Calu3 (cell line): ENCODE measurements at regions of chr4 and their contacts with region 1.

Region 1: DNA sequence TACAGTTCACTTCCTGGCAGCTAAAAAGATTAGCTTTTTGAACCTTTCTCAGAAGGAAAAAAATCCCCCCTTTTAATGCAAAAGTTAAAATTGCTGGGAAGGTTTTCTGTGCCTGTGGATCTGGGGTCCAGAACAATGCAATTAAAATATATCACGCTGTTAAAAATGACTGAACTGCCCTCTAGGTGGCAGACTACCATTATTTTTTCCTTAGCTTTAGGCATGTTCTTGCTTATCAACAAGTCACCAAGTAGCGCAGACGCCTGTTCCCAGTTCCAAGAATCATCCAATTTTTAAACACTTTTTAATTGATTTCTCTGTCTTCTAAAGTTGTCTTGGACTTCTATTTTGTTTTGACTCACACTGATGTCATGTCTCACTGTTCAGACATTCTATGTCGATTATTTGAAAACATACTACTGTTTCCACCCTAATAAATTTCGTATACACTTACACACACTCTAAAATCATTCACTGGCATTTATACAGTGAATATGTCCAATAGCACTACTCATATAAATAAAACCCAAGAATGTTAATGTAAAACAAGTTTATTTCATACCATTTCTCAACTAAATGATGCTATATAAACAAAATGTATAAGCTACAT is 661.6 kb downstream of the RAPGEF2 start:
- DNase-seq: peak; percentile 55
- H3K4me3 Mint-ChIP-seq: no peak overlapping the region
- H3K27ac Mint-ChIP-seq: no peak overlapping the region
- H3K4me1 Mint-ChIP-seq: peaks cover 15% of the 10 kb centered on the region
- H3K27me3 Mint-ChIP-seq: no peaks in the 10 kb centered on the region
- CTCF ChIP-seq: peak; percentile 34

Region 2: GRCh38 chr4:159608437-159608836 is 156.0 kb before region 1 on chr4:
- CTCF ChIA-PET with region 1: no interaction called
- intact Hi-C with region 1: loop called (anchors 10 kb)
- DNase-seq: no peak
- H3K4me3 Mint-ChIP-seq: no peak overlapping the region
- H3K27ac Mint-ChIP-seq: no peak overlapping the region
- H3K4me1 Mint-ChIP-seq: peaks cover 4% of the 10 kb centered on the region
- H3K27me3 Mint-ChIP-seq: no peaks in the 10 kb centered on the region
- CTCF ChIP-seq: no peak

Region 3: GRCh38 chr4:159856451-159856850 is 92.0 kb after region 1 on chr4:
- CTCF ChIA-PET with region 1: no interaction called
- intact Hi-C with region 1: loop called (anchors 10 kb)
- DNase-seq: no peak
- H3K4me3 Mint-ChIP-seq: no peak overlapping the region
- H3K27ac Mint-ChIP-seq: no peak overlapping the region
- H3K4me1 Mint-ChIP-seq: peaks cover 10% of the 10 kb centered on the region
- H3K27me3 Mint-ChIP-seq: no peaks in the 10 kb centered on the region
- CTCF ChIP-seq: no peak

Region 4: GRCh38 chr4:159900562-159900961 is 136.1 kb after region 1 on chr4:
- CTCF ChIA-PET with region 1: no interaction called
- intact Hi-C with region 1: loop called (anchors 10 kb)
- DNase-seq: no peak
- H3K4me3 Mint-ChIP-seq: no peak overlapping the region
- H3K27ac Mint-ChIP-seq: no peak overlapping the region
- H3K4me1 Mint-ChIP-seq: peaks cover 10% of the 10 kb centered on the region
- H3K27me3 Mint-ChIP-seq: no peaks in the 10 kb centered on the region
- CTCF ChIP-seq: no peak

Region 5: GRCh38 chr4:159946983-159947615 is 182.7 kb after region 1 on chr4:
- CTCF ChIA-PET with region 1: no interaction called
- intact Hi-C with region 1: loop called (anchors 2 kb)
- DNase-seq: no peak
- H3K4me3 Mint-ChIP-seq: no peak overlapping the region
- H3K27ac Mint-ChIP-seq: no peak overlapping the region
- H3K4me1 Mint-ChIP-seq: no peaks in the 10 kb centered on the region
- H3K27me3 Mint-ChIP-seq: no peaks in the 10 kb centered on the region
- CTCF ChIP-seq: peak; percentile 23

Region 6: DNA sequence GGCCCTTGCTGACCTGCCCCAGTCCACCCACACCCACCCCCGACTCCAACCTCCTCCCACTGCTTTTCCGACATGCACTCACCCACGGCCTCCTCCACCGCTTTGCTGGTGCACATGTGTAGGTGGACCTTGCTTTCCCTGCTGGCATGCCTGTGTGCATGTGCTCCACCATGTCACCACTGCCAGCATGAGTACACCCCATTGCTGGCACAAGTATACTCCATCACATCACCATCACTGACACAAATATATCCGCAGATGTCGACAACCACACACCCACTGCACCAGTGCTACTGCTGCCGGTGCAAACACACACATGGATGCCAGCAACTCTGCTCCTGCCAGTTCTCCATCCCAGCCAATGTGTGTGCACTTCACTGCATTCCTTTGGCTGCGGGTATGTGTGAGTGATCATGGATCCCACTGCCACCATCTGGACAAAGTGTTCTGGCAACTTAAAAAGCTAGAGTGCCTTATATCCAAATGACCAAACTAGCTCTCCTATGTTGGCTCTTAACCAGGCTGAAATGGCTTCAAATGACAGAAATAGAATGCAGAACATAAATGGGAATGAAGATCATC is 410.7 kb after region 1 on chr4:
- CTCF ChIA-PET with region 1: no interaction called
- intact Hi-C with region 1: loop called (anchors 5 kb)
- DNase-seq: no peak
- H3K4me3 Mint-ChIP-seq: no peak overlapping the region
- H3K27ac Mint-ChIP-seq: no peak overlapping the region
- H3K4me1 Mint-ChIP-seq: peaks cover 6% of the 10 kb centered on the region
- H3K27me3 Mint-ChIP-seq: no peaks in the 10 kb centered on the region
- CTCF ChIP-seq: no peak

Region 7: GRCh38 chr4:160825644-160826338 is 1061.3 kb after region 1 on chr4:
- CTCF ChIA-PET with region 1: no interaction called
- intact Hi-C with region 1: loop called (anchors 10 kb)
- DNase-seq: peak; percentile 51
- H3K4me3 Mint-ChIP-seq: peak overlapping the region; percentile 84
- H3K27ac Mint-ChIP-seq: peak overlapping the region; percentile 100
- H3K4me1 Mint-ChIP-seq: peaks cover 27% of the 10 kb centered on the region
- H3K27me3 Mint-ChIP-seq: no peaks in the 10 kb centered on the region
- CTCF ChIP-seq: no peak